ENCODE measurements at regions of chr5 and their contacts with region 1.

Region 1: DNA sequence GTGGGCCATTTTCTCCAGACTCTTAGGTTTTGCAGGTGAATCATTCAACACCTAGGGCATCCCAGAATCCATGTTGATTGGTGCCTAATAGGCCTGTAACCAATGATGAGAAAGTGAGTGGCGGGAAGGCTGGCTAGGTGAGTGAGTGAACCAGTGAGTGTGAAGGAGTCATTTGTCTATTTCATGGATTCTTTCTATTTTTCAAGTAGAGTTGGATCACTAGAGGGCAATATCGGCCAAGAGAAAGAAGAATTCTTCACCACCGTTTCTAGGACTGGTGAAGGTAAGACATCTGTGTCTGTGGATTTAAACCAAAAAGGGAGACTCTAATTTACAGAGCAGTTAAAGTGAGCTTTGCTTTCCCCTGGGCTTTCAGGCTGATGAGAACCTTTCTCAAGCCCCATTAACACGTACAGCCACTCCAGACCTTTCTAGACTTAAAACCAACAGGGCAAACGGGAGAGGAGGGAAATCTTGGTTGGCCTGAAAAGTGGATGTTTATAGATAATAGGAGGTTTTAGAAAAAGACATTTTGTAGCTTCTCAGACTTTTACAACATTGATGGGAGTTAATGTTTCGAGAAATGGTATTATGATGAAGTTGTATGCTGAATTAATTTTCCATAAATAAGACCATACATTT is 114.3 kb upstream of the IL12B start:
- DNase-seq: peak in 1 of 2 experiments; percentile 56
- H3K4me3 ChIP-seq: no peak overlapping the region
- H3K4me3 Mint-ChIP-seq: no peak overlapping the region
- H3K27ac Mint-ChIP-seq: no peak overlapping the region
- H3K4me1 ChIP-seq: no peaks in the 10 kb centered on the region
- H3K4me1 Mint-ChIP-seq: no peaks in the 10 kb centered on the region
- H3K27me3 ChIP-seq: no peaks in the 10 kb centered on the region
- H3K27me3 Mint-ChIP-seq: peaks cover 13% of the 10 kb centered on the region
- CTCF ChIP-seq: peak; percentile 48 to 56

Region 2: DNA sequence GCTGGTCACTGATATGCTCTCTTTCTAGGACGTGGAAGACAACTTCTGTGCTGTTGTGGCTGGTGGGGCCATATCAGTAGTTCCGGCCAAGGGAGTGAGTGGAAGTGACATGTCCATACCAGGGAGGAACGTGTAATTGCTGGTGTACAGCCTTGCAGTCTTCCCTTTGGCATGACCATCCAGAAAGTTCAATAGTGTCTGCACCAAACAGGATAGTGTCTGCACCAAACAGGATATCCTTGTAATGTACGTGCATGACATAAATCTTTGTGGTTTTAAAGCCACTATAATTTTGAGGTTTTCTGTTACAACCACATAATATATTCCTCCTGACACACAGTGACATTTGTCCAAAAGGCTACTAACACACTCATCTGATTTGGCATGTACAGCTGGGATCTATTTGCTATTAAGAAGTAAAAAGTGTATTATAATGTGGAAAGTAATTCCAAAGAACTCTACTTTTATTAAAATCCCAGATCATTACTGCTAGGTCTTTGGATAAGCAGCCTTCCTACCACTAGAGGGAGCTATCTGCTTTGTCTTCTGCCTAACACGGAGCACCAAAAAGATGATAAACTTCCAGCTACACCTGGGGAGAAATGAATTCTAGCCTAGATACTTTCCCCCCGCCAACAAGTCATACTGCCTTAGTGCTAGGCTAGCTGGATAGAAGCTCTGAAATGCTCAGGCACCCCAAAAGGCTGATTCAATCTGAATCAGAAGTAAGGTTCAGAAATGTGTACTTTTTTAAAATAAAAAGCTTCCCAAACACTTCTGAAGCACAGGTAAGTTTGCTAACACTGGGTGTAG is 287.9 kb before region 1 on chr5:
- CTCF ChIA-PET with region 1: no interaction called
- POLR2A ChIA-PET with region 1: no interaction called
- intact Hi-C with region 1: loop called (anchors 2 kb)
- DNase-seq: peak in 1 of 2 experiments; percentile 62
- H3K4me3 ChIP-seq: no peak overlapping the region
- H3K4me3 Mint-ChIP-seq: no peak overlapping the region
- H3K27ac Mint-ChIP-seq: no peak overlapping the region
- H3K4me1 ChIP-seq: no peaks in the 10 kb centered on the region
- H3K4me1 Mint-ChIP-seq: no peaks in the 10 kb centered on the region
- H3K27me3 ChIP-seq: no peaks in the 10 kb centered on the region
- H3K27me3 Mint-ChIP-seq: no peaks in the 10 kb centered on the region
- CTCF ChIP-seq: peak; percentile 79 to 85

Region 3: DNA sequence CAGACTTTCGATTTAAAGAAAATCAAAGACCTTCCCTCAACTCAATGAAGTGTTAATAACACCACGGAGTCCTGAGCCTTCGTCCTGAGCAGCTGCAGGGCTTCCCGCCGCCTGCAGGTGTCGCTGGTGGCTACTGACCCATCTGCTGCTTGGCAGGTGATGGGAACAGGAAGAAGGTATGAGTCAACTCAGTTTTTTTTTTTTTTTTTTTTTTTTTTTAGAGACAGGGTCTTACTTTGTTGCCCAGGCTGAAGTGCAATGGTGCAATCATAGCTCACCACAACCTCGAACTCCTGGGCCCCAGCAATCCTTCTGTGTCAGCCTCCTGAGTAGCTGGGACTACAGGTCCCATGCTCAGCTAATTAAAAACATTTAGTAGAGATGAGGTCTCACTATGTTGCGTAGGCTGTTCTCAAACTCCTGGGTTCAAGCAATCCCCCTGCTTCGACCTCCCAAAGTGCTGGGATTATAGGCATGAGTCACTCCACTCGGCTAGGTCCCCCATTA is 71.4 kb after region 1 on chr5:
- CTCF ChIA-PET with region 1: no interaction called
- POLR2A ChIA-PET with region 1: no interaction called
- intact Hi-C with region 1: loop called (anchors 2 kb)
- DNase-seq: peak; percentile 59 to 71
- H3K4me3 ChIP-seq: no peak overlapping the region
- H3K4me3 Mint-ChIP-seq: no peak overlapping the region
- H3K27ac Mint-ChIP-seq: no peak overlapping the region
- H3K4me1 ChIP-seq: peaks cover 1% of the 10 kb centered on the region; the same call in 1 of the 2 replicates
- H3K4me1 Mint-ChIP-seq: no peaks in the 10 kb centered on the region
- H3K27me3 ChIP-seq: no peaks in the 10 kb centered on the region; the same call in 1 of the 2 replicates
- H3K27me3 Mint-ChIP-seq: peaks cover 4% of the 10 kb centered on the region
- CTCF ChIP-seq: peak; percentile 73 to 89

Region 4: DNA sequence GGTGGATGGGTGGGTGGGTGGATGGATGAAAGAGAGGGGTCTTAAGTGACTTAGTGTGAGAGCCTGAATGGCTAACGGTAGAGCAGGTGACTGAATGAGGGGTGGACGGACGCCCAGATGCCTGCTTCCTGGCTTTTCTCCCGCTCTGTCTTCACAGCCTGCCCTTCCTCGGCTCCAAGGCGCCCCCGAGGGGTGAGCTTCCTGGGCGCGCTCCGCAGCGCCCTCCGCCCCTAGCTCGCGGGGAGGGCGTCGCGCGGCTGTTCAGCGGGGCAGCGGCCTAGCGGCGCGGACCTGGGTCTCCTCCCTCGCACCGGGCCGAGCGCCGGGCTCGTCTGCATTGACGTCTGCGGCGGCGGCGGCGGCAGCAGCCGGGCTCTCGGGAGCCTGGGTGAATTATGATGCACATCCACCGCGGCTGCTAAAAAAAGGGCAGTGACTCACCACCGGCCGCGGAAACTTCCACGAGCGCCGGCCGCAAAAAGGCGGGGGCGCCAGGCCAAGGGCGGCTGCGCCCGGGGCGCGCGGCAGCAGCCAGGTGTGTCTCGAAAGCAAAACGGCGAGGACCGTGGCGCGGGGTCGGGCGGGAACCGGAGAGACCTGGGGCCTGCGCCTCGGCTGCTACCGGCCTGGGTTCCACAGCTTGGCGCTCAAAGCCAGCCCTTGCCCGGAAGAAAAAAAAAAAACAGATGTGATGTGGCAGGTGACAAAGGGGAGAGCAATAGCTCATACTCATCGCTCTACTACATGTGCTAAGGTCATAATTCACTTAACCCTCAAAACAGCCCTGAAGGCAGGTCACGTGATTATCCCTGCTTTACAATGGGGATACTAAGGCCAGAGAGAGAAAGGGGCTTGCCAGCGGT is 328.7 kb after region 1 on chr5:
- CTCF ChIA-PET with region 1: no interaction called
- POLR2A ChIA-PET with region 1: no interaction called
- intact Hi-C with region 1: loop called (anchors 2 kb)
- DNase-seq: peak in 1 of 2 experiments; percentile 48
- H3K4me3 ChIP-seq: peak overlapping the region; percentile 28
- H3K4me3 Mint-ChIP-seq: peak overlapping the region; percentile 60
- H3K27ac Mint-ChIP-seq: no peak overlapping the region
- H3K4me1 ChIP-seq: no peaks in the 10 kb centered on the region
- H3K4me1 Mint-ChIP-seq: peaks cover 14% of the 10 kb centered on the region
- H3K27me3 ChIP-seq: no peaks in the 10 kb centered on the region; the same call in 1 of the 2 replicates
- H3K27me3 Mint-ChIP-seq: peaks cover 21% of the 10 kb centered on the region
- CTCF ChIP-seq: peak in 1 of 2 experiments; percentile 38

Region 5: GRCh38 chr5:159965031-159965837 is 520.7 kb after region 1 on chr5:
- CTCF ChIA-PET with region 1: no interaction called
- POLR2A ChIA-PET with region 1: no interaction called
- intact Hi-C with region 1: loop called (anchors 1 kb)
- DNase-seq: peak; percentile 44 to 48
- H3K4me3 ChIP-seq: no peak overlapping the region
- H3K4me3 Mint-ChIP-seq: no peak overlapping the region
- H3K27ac Mint-ChIP-seq: no peak overlapping the region
- H3K4me1 ChIP-seq: no peaks in the 10 kb centered on the region
- H3K4me1 Mint-ChIP-seq: no peaks in the 10 kb centered on the region
- H3K27me3 ChIP-seq: no peaks in the 10 kb centered on the region; the same call in 1 of the 2 replicates
- H3K27me3 Mint-ChIP-seq: peaks cover 18% of the 10 kb centered on the region
- CTCF ChIP-seq: peak in 1 of 2 experiments; percentile 48

Region 6: DNA sequence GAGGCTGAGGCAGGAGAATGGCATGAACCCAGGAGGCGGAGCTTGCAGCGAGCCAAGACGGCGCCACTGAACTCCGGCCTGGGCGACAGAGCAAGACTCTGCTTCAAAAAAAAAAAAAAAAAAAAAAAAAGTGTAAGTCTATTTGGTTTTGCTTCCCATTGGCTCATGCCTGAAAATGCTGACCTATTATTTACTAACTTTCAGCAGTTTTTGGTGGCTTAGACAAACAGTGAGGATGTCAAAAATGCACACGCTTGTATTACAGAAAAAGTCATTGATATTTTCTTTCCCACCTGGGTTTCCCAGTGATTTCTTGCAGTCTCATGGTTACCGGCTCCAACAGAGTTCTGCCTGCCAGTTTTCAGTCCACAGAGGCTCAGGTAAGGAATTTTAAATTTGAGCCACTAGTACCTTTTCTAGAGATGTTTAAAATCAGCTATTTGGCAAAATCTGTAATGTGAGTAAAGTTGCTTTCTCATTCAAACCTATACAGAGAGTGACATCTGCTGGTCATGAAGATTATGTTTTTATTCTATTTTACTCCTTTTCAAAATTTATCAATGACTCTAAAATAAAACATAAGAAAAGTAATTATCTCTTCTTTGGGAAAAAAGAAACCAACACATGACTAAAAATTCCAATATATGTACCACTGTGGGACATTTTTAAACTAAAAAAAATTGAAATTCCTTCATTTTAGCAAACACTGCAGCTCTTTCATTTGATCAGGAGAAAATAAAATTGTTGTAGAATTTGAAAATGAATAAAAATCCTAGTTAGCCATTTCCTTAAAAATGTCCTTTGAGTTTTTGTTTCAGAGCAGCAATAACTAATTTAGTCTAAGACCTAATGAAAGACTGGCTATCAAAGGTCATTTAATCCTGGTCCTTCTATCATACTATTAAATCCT is 946.5 kb after region 1 on chr5:
- CTCF ChIA-PET with region 1: no interaction called
- POLR2A ChIA-PET with region 1: no interaction called
- intact Hi-C with region 1: loop called (anchors 5 kb)
- DNase-seq: no peak
- H3K4me3 ChIP-seq: no peak overlapping the region
- H3K4me3 Mint-ChIP-seq: no peak overlapping the region
- H3K27ac Mint-ChIP-seq: no peak overlapping the region
- H3K4me1 ChIP-seq: no peaks in the 10 kb centered on the region
- H3K4me1 Mint-ChIP-seq: no peaks in the 10 kb centered on the region
- H3K27me3 ChIP-seq: no peaks in the 10 kb centered on the region
- H3K27me3 Mint-ChIP-seq: no peaks in the 10 kb centered on the region
- CTCF ChIP-seq: peak; percentile 43 to 49

Measured in Caco-2 (cell line).